CD4-positive, alpha-beta T cell (primary cell): ENCODE measurements at regions of chr5 and their contacts with region 1.

Region 1: DNA sequence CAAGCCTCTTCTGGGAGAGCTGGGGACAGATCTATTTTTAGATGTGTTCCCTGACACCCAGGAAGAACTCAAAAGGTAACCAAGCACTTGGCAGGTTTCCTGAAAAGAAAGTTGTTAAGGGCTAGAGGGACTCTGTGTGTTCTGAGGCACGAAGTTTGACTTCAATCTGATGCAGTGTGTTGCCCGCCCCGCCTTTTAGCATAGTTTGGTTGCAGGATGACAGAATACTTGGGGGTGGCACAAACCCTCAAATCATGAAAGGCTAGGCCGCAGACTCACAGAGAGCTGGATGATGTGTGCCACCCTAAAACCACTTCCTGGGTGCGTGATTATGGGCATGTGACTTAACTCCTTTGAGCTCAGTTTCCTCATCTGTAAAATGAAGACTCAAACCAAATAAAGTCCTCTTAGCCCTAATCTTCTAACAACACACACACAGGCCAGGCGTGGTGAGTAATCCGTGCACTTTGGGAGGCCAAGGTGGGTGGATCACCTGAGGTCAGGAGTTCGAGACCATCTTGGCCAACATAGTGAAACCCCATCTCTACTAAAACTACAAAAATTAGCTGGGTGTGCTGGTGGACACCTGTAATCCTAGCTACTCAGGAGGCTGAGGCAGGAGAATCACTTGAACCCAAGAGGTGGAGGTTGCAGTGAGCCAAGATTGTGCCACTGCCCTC is 12.8 kb upstream of the NDFIP1 start:
- DNase-seq: peak; percentile 67 to 96 (median 76)
- ATAC-seq: peak; percentile 85
- H3K4me3 ChIP-seq: no peak overlapping the region
- H3K4me3 Mint-ChIP-seq: peak overlapping the region; percentile 28
- H3K27ac ChIP-seq: peak overlapping the region; percentile 71 to 75
- H3K27ac Mint-ChIP-seq: peak overlapping the region; percentile 94
- H3K4me1 ChIP-seq: peaks cover 61% of the 10 kb centered on the region
- H3K4me1 Mint-ChIP-seq: peaks cover 70% of the 10 kb centered on the region
- H3K27me3 ChIP-seq: no peaks in the 10 kb centered on the region
- H3K27me3 Mint-ChIP-seq: no peaks in the 10 kb centered on the region
- CTCF ChIP-seq: no peak

Region 2: DNA sequence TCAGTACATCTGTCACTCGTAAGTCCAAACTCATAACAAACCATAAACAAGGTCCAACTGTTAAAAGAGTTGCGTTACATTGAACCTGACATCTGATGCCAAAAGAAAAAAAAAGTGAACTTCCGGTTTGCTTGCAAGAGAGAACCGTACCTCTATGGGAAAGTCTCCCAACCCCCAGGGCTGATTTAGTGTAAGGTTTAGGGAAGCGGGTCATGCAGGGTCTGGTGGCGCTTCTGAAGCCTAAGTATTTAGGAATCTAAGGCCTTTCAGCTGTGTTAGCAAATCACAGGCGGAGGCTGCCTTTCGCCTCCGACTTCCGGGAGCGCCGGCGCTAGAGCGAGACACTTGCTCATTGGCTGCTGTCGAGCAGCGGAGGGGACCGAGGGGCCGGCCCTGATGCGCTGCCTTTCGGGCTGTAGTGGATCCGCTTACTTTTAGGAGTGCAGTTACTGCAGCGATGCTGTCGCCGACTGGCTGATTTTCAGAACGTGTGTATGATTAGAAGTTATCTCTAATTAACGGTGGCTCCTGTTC is 71.0 kb before region 1 on chr5:
- CTCF ChIA-PET with region 1: no interaction called
- POLR2A ChIA-PET with region 1: interaction called, 13 read pairs
- intact Hi-C with region 1: no loop called
- DNase-seq: peak; percentile 62 to 91 (median 80)
- ATAC-seq: peak; percentile 100
- H3K4me3 ChIP-seq: peak overlapping the region; percentile 53
- H3K4me3 Mint-ChIP-seq: peak overlapping the region; percentile 83
- H3K27ac ChIP-seq: peak overlapping the region; percentile 72 to 88
- H3K27ac Mint-ChIP-seq: peak overlapping the region; percentile 93
- H3K4me1 ChIP-seq: peaks cover 8% of the 10 kb centered on the region
- H3K4me1 Mint-ChIP-seq: peaks cover 25% of the 10 kb centered on the region
- H3K27me3 ChIP-seq: no peaks in the 10 kb centered on the region
- H3K27me3 Mint-ChIP-seq: no peaks in the 10 kb centered on the region
- CTCF ChIP-seq: no peak

Region 3: DNA sequence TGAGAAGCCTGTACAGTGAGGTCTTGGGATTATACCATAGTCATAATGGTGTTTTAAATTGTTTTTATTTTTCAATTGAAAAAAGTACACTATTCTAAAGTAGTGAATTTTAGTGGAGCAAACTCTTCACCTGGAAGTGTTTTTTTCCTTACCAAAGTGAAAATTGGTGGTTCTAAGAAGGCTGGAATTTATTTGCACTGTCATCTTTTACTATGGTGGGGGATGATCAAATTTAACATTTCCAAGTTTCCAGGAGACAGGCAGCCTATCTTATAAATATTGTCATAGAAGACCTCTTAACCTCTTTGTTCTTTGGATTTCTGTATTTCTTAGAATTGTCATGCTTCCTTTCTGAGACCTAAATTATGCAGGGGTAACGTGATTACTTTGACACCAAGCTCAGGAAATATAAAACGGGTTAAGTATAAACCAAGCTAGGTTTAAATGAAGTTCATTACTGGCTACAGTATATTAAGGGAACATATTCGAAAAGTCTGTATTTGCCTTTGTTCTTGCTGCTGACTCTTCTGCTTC is 33.0 kb after region 1 on chr5:
- CTCF ChIA-PET with region 1: no interaction called
- POLR2A ChIA-PET with region 1: interaction called, 4 read pairs
- intact Hi-C with region 1: loop called in 1 of 2 experiments (anchors 5 kb)
- DNase-seq: peak in 1 of 14 experiments; percentile 48
- ATAC-seq: peak; percentile 61
- H3K4me3 ChIP-seq: no peak overlapping the region
- H3K4me3 Mint-ChIP-seq: peak overlapping the region; percentile 49
- H3K27ac ChIP-seq: no peak overlapping the region
- H3K27ac Mint-ChIP-seq: peak overlapping the region; percentile 55
- H3K4me1 ChIP-seq: peaks cover 38% of the 10 kb centered on the region
- H3K4me1 Mint-ChIP-seq: peaks cover 68% of the 10 kb centered on the region
- H3K27me3 ChIP-seq: no peaks in the 10 kb centered on the region
- H3K27me3 Mint-ChIP-seq: no peaks in the 10 kb centered on the region
- CTCF ChIP-seq: no peak

Region 4: DNA sequence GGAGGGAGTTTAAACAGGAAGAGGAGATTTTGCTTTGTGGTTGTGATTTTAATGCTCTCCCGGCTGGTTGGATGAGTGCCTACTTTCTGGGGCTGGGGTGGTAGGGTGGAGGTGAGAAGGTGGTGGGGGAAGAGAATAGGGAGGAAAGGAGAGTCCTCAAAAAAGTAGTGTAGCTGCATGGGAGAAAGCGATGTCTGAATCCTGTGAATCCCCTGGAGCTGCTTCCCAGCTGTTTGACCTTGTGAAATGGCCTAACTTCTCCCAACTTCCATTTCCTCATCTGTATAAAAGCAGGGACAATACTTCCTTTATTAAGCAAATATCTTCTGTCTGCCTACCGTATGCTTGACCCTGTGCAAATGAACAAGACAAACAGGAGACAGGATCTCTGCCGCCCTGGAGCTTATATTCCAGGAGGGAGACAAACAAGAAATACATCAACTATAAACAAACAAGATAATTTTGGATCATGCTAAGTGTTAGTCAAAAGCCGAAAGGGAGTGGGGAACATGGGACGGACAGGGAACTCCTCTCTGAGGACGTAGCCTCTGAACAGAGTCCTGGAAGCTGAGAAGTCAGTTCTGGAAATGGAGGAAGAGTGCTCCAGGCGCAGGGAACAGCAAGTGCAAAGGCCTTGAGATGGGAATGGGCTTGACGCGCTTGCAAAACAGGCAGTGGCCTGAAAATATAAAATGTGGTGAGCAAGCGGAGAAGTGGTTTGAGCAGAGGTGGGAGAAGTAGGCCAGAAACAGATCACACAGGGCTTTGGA is 125.5 kb after region 1 on chr5:
- CTCF ChIA-PET with region 1: no interaction called
- POLR2A ChIA-PET with region 1: no interaction called
- intact Hi-C with region 1: loop called in 1 of 2 experiments (anchors 10 kb)
- DNase-seq: no peak
- ATAC-seq: no peak
- H3K4me3 ChIP-seq: no peak overlapping the region
- H3K4me3 Mint-ChIP-seq: no peak overlapping the region
- H3K27ac ChIP-seq: no peak overlapping the region
- H3K27ac Mint-ChIP-seq: no peak overlapping the region
- H3K4me1 ChIP-seq: peaks cover 29% of the 10 kb centered on the region
- H3K4me1 Mint-ChIP-seq: peaks cover 42% of the 10 kb centered on the region
- H3K27me3 ChIP-seq: no peaks in the 10 kb centered on the region
- H3K27me3 Mint-ChIP-seq: no peaks in the 10 kb centered on the region
- CTCF ChIP-seq: no peak